ENCODE measurements at regions of chr12 and their contacts with region 1.

Region 1: GRCh38 chr12:66409195-66409871 is 107.0 kb downstream of the HELB start:
- DNase-seq: peak in 7 of 9 experiments; percentile 11 to 70 (median 50)
- ATAC-seq: peak; percentile 73
- H3K4me3 ChIP-seq: no peak overlapping the region
- H3K4me3 Mint-ChIP-seq: no peak overlapping the region
- H3K27ac ChIP-seq: no peak overlapping the region
- H3K27ac Mint-ChIP-seq: no peak overlapping the region
- H3K4me1 ChIP-seq: no peaks in the 10 kb centered on the region
- H3K4me1 Mint-ChIP-seq: no peaks in the 10 kb centered on the region
- H3K27me3 ChIP-seq: no peaks in the 10 kb centered on the region
- H3K27me3 Mint-ChIP-seq: peaks cover 26% of the 10 kb centered on the region
- CTCF ChIP-seq: peak; percentile 72

Region 2: GRCh38 chr12:64890873-64891468 is 1518.4 kb before region 1 on chr12:
- CTCF ChIA-PET with region 1: no interaction called
- POLR2A ChIA-PET with region 1: no interaction called
- intact Hi-C with region 1: loop called in 1 of 2 experiments (anchors 2 kb)
- DNase-seq: peak in 2 of 9 experiments; percentile 60 to 69
- ATAC-seq: peak; percentile 48
- H3K4me3 ChIP-seq: no peak overlapping the region
- H3K4me3 Mint-ChIP-seq: no peak overlapping the region
- H3K27ac ChIP-seq: no peak overlapping the region
- H3K27ac Mint-ChIP-seq: no peak overlapping the region
- H3K4me1 ChIP-seq: no peaks in the 10 kb centered on the region
- H3K4me1 Mint-ChIP-seq: no peaks in the 10 kb centered on the region
- H3K27me3 ChIP-seq: no peaks in the 10 kb centered on the region
- H3K27me3 Mint-ChIP-seq: peaks cover 27% of the 10 kb centered on the region
- CTCF ChIP-seq: peak; percentile 90

Region 3: DNA sequence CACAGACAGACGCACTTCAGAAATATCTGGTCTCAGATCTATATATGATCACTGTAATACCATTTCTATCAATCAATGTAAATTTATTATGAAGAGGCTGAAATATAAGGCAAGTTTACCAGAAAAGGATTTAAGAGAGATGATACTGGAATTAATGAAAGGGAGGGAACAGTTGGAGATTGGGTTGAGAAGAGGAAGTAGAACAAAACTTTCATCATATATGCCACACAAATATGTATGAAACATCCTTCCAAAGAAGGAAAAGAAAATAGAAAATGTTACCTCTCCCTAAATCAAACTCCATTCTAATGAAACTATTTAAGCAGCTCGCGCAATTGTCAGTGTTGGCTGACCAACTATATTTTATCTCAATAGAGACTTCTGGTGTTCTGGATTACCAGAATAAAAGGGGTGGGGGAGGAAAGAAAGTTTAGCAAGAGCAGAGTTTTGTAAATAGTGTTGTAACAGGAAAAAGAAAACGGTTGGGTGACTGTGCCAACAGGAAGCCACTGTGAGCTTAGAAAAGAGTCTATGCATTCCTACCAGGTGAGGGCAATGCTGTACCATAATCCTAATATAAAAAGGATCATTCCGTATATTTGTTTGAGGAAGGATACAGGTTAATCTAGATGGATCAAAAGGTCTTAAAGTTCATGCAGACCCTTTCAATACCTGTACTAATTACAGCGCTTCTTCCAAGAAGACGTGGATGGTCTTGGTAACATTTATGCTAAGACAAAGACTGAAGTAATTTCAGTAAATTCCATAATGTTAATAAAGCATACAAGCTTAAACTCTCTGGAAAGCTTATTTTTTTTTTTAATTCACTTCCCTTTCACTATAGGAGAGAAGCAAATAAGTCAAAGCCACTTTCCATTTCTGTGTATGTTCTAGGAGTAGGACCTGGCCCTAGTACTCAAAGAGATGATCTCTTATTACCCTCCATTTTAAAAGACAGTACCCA is 264.3 kb before region 1 on chr12:
- CTCF ChIA-PET with region 1: interaction called, 4 read pairs
- POLR2A ChIA-PET with region 1: no interaction called
- intact Hi-C with region 1: loop called (anchors 1 to 2 kb)
- DNase-seq: peak in 2 of 9 experiments; percentile 19 to 42
- ATAC-seq: no peak
- H3K4me3 ChIP-seq: no peak overlapping the region
- H3K4me3 Mint-ChIP-seq: no peak overlapping the region
- H3K27ac ChIP-seq: no peak overlapping the region
- H3K27ac Mint-ChIP-seq: peak overlapping the region; percentile 82
- H3K4me1 ChIP-seq: no peaks in the 10 kb centered on the region
- H3K4me1 Mint-ChIP-seq: peaks cover 21% of the 10 kb centered on the region
- H3K27me3 ChIP-seq: no peaks in the 10 kb centered on the region
- H3K27me3 Mint-ChIP-seq: no peaks in the 10 kb centered on the region
- CTCF ChIP-seq: peak; percentile 35

Region 4: DNA sequence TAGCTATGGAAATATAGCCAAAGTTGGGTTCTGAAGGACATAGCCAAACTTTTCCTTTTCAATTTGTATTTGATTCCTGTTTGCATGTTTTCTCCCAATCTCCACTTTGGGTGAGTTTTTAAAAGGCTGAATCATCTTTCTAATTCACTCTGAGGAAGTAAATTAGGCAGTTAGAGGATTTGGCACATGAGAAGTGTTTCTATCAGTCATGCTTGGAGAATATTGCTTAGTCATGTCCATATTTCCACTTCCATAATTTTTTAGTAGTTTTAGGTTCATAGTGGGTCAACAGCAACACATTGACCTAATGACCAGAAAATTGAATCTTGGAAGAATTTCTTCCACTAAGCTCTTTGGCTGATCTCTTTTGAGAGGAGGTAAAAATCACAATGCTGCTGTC is 198.5 kb before region 1 on chr12:
- CTCF ChIA-PET with region 1: no interaction called
- POLR2A ChIA-PET with region 1: no interaction called
- intact Hi-C with region 1: no loop called
- DNase-seq: no peak
- ATAC-seq: no peak
- H3K4me3 ChIP-seq: no peak overlapping the region
- H3K4me3 Mint-ChIP-seq: no peak overlapping the region
- H3K27ac ChIP-seq: no peak overlapping the region
- H3K27ac Mint-ChIP-seq: no peak overlapping the region
- H3K4me1 ChIP-seq: no peaks in the 10 kb centered on the region
- H3K4me1 Mint-ChIP-seq: no peaks in the 10 kb centered on the region
- H3K27me3 ChIP-seq: peaks cover 0 to 3% of the 10 kb centered on the region in 2 experiments
- H3K27me3 Mint-ChIP-seq: peaks cover 31% of the 10 kb centered on the region
- CTCF ChIP-seq: no peak

Region 5: DNA sequence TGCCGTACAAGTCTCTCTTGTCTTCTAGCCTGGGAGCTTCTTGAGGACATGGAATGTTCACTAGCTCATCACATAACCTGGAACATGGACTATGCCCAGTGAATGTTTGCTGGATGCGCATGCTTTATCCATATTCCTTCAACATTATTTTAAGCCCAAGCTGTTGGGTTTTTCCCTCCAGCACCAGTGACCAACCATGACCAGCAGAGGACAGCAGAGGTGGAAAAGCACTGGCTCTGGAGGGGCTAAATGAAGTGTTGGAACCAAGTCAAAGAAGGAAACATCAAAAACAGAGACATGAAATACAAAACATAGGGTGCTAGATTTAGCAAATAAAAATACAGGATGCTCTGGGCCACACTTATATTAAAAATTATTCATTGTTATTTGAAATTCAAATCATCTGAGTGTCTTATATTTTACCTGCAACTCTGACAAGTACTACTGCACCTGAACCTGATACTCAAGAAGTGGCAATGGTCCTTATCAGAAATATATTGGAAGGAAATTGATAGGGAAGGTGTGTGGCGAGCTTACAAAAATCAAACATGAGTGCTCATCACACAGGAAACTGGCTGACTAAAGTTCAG is 130.1 kb before region 1 on chr12:
- CTCF ChIA-PET with region 1: interaction called, 136 read pairs
- POLR2A ChIA-PET with region 1: no interaction called
- intact Hi-C with region 1: loop called (anchors 1 to 2 kb)
- DNase-seq: peak in 8 of 9 experiments; percentile 18 to 73 (median 45)
- ATAC-seq: peak; percentile 70
- H3K4me3 ChIP-seq: no peak overlapping the region
- H3K4me3 Mint-ChIP-seq: peak overlapping the region; percentile 12
- H3K27ac ChIP-seq: no peak overlapping the region
- H3K27ac Mint-ChIP-seq: no peak overlapping the region
- H3K4me1 ChIP-seq: peaks cover 24% of the 10 kb centered on the region
- H3K4me1 Mint-ChIP-seq: peaks cover 47% of the 10 kb centered on the region
- H3K27me3 ChIP-seq: no peaks in the 10 kb centered on the region
- H3K27me3 Mint-ChIP-seq: no peaks in the 10 kb centered on the region
- CTCF ChIP-seq: peak; percentile 63

Region 6: GRCh38 chr12:66398931-66399910 is 10.1 kb before region 1 on chr12:
- CTCF ChIA-PET with region 1: interaction called, 21 read pairs
- POLR2A ChIA-PET with region 1: no interaction called
- intact Hi-C with region 1: no loop called
- DNase-seq: no peak
- ATAC-seq: no peak
- H3K4me3 ChIP-seq: no peak overlapping the region
- H3K4me3 Mint-ChIP-seq: no peak overlapping the region
- H3K27ac ChIP-seq: no peak overlapping the region
- H3K27ac Mint-ChIP-seq: no peak overlapping the region
- H3K4me1 ChIP-seq: peaks cover 5% of the 10 kb centered on the region
- H3K4me1 Mint-ChIP-seq: peaks cover 9% of the 10 kb centered on the region
- H3K27me3 ChIP-seq: peaks cover 0 to 3% of the 10 kb centered on the region in 2 experiments
- H3K27me3 Mint-ChIP-seq: peaks cover 31% of the 10 kb centered on the region
- CTCF ChIP-seq: no peak

Region 7: DNA sequence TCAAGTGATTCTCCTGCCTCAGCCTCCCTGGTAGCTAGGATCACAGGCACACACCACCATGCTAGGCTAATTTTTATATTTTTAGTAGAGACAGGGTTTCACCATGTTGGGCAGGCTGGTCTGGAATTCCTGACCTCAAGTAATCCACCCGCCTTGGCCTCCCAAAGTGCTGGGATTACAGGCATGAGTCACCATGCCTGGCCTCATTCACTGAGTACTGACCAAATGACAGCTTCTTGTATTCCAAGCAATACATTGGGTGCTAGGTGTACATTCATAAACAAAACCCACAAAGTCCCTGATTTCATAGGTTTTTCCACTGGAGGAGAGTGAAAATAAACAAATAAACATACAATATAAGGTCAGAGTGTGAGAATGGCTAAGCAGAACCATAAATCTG is 29.3 kb after region 1 on chr12:
- CTCF ChIA-PET with region 1: no interaction called
- POLR2A ChIA-PET with region 1: no interaction called
- intact Hi-C with region 1: no loop called
- DNase-seq: no peak
- ATAC-seq: no peak
- H3K4me3 ChIP-seq: no peak overlapping the region
- H3K4me3 Mint-ChIP-seq: no peak overlapping the region
- H3K27ac ChIP-seq: no peak overlapping the region
- H3K27ac Mint-ChIP-seq: no peak overlapping the region
- H3K4me1 ChIP-seq: no peaks in the 10 kb centered on the region
- H3K4me1 Mint-ChIP-seq: no peaks in the 10 kb centered on the region
- H3K27me3 ChIP-seq: no peaks in the 10 kb centered on the region
- H3K27me3 Mint-ChIP-seq: no peaks in the 10 kb centered on the region
- CTCF ChIP-seq: no peak

Region 8: DNA sequence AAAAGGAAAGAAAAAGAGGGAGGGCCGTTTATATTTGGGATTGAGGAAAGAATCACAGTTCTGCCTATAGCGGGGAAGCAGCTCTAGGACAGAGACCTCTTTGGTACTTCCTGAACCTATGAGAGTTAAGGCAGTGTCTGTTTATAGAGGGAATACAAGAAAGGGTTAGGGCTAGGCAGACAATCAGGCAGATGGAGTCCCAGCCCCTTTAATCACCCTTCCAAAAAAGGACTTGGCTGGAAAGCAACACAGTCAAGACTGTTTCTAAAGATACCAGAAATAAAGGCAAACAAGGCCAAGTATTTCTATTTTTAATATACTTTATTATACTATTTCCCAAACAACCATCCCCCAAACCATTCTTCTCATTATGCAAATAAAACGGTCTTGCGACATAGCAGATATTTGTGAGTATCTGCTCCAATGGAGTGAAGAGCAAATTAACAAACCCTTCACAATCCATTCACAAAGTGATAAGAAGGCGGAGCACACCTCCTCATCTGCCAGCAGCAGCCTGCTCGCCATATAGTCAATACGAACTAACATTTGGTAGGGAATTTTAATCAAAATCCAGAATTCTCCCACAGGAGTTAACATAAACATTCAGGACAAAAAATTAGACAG is 270.2 kb after region 1 on chr12:
- CTCF ChIA-PET with region 1: no interaction called
- POLR2A ChIA-PET with region 1: no interaction called
- intact Hi-C with region 1: no loop called
- DNase-seq: no peak
- ATAC-seq: no peak
- H3K4me3 ChIP-seq: no peak overlapping the region
- H3K4me3 Mint-ChIP-seq: no peak overlapping the region
- H3K27ac ChIP-seq: no peak overlapping the region
- H3K27ac Mint-ChIP-seq: no peak overlapping the region
- H3K4me1 ChIP-seq: no peaks in the 10 kb centered on the region
- H3K4me1 Mint-ChIP-seq: no peaks in the 10 kb centered on the region
- H3K27me3 ChIP-seq: no peaks in the 10 kb centered on the region
- H3K27me3 Mint-ChIP-seq: peaks cover 12% of the 10 kb centered on the region
- CTCF ChIP-seq: no peak

Measured in CD8-positive, alpha-beta T cell (primary cell).